H1 (cell line): ENCODE measurements at regions of chr2 and their contacts with region 1.

Region 1: GRCh38 chr2:6352906-6353515 is 512.7 kb downstream of the CMPK2 start:
- DNase-seq: peak; percentile 56 to 88
- H3K4me3 ChIP-seq: no peak overlapping the region
- H3K27ac ChIP-seq: no peak overlapping the region
- H3K4me1 ChIP-seq: no peaks in the 10 kb centered on the region; a peak in 1 of 7 replicates
- H3K27me3 ChIP-seq: no peaks in the 10 kb centered on the region
- CTCF ChIP-seq: peak; percentile 67 to 81 (median 79)
- EP300 ChIP-seq: no peak
- POLR2A ChIP-seq: no peak
- RAD21 ChIP-seq: peak; percentile 86 to 89

Region 2: DNA sequence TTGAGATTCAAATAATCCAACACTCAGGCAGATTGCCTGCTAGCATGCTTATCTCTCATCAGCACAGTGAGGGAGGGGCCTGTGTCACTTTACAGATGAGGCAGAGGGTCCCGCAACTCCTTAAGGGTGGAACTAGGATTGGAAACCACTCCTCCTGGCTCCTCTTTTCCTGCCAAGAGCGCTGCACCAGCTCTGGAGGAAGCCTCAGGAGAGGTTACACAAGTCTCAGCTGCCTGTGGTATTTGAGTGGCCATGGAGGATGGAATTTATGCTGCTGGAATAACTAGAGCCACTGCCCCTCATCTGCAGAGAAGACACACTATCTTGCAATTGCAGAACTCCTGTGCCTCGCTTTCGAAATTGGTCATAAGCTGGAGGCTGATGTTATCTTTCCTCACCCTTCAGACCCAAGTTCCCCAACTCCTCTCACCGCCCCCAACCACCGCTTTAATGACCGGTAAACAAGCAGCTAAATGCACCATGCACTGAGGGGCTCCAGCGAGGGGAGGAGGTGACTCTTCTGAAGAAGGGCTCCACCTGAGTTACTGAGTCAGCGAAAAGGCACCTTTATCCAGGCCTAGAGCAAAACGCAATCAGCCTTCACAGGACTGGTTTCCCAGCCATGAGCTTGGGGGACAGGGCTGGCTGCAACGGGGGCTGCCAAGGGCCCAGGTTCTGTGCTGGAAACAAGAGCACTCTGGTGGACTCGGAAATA is 415.0 kb before region 1 on chr2:
- CTCF ChIA-PET with region 1: no interaction called
- POLR2A ChIA-PET with region 1: no interaction called
- DNase-seq: no peak
- H3K4me3 ChIP-seq: no peak overlapping the region
- H3K27ac ChIP-seq: no peak overlapping the region
- H3K4me1 ChIP-seq: peaks cover 0 to 8% (median 4%) of the 10 kb centered on the region in 4 experiments; a peak in 5 of 7 replicates
- H3K27me3 ChIP-seq: no peaks in the 10 kb centered on the region; a peak in 1 of 7 replicates
- CTCF ChIP-seq: no peak
- EP300 ChIP-seq: no peak
- POLR2A ChIP-seq: no peak
- RAD21 ChIP-seq: no peak

Region 3: GRCh38 chr2:6337472-6337820 is 15.6 kb before region 1 on chr2:
- CTCF ChIA-PET with region 1: interaction called, 12 read pairs
- POLR2A ChIA-PET with region 1: no interaction called
- DNase-seq: no peak
- H3K4me3 ChIP-seq: no peak overlapping the region
- H3K27ac ChIP-seq: no peak overlapping the region
- H3K4me1 ChIP-seq: 0 out of 7 replicates have a peak, but pooled peaks cover 0 to 2% (median 0%) of the 10 kb centered on the region in 4 experiments
- H3K27me3 ChIP-seq: no peaks in the 10 kb centered on the region
- CTCF ChIP-seq: no peak
- EP300 ChIP-seq: no peak
- POLR2A ChIP-seq: no peak
- RAD21 ChIP-seq: no peak

Region 4: DNA sequence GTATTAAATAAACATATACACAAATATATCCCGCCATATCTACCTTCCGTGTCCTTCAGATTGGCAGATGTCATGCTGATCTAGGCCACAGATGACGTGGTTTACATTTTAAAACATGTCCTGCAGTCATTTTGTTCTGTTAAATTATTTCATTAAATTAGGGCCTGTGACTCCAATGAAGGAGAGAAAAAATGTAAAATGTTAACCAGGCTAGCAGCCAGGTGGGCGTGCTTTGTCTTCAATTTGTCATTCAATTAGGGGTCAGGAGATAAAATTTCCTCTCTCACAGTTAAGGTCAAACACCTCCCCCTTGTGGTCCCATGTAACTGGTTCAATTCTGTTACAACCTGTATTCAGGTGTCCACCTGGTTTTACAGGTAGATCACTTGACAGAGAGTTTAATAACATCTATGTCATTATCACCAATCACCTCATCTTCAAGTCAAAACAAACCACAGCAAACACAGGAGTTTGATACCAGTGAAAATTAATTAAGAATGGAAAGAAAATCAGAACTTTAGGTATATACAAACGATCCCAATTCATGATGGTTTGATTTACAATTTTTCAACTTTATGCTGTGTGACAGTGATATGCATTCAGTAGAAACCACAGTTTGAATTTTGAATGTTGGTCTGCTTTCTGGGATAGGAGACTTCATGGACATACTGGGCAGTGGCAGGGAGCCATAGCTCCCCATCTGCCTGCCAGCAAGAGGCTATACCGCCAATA is 173.2 kb after region 1 on chr2:
- CTCF ChIA-PET with region 1: interaction called, 14 read pairs
- POLR2A ChIA-PET with region 1: no interaction called
- DNase-seq: no peak
- H3K4me3 ChIP-seq: no peak overlapping the region
- H3K27ac ChIP-seq: no peak overlapping the region
- H3K4me1 ChIP-seq: peaks cover 3 to 7% (median 7%) of the 10 kb centered on the region in 4 experiments; a peak in 3 of 7 replicates
- H3K27me3 ChIP-seq: no peaks in the 10 kb centered on the region
- CTCF ChIP-seq: peak in 2 of 3 experiments; percentile 62 to 68; a peak in 3 of 4 replicates
- EP300 ChIP-seq: no peak
- POLR2A ChIP-seq: no peak
- RAD21 ChIP-seq: peak; percentile 89 to 90